ENCODE measurements at regions of chr9 and their contacts with region 1.

Region 1: GRCh38 chr9:93302551-93303257 is 118.8 kb downstream of the WNK2 start:
- DNase-seq: peak; percentile 87
- H3K4me3 ChIP-seq: no peak overlapping the region
- H3K27ac ChIP-seq: peak overlapping the region in 1 of 8 donors; percentile 21
- H3K4me1 ChIP-seq: peaks cover 6 to 29% (median 10%) of the 10 kb centered on the region in 6 donors
- H3K27me3 ChIP-seq: peaks cover 0 to 4% (median 0%) of the 10 kb centered on the region in 7 donors
- CTCF ChIP-seq: peak; percentile 51 to 83 (median 76)
- POLR2A ChIP-seq: no peak

Region 2: DNA sequence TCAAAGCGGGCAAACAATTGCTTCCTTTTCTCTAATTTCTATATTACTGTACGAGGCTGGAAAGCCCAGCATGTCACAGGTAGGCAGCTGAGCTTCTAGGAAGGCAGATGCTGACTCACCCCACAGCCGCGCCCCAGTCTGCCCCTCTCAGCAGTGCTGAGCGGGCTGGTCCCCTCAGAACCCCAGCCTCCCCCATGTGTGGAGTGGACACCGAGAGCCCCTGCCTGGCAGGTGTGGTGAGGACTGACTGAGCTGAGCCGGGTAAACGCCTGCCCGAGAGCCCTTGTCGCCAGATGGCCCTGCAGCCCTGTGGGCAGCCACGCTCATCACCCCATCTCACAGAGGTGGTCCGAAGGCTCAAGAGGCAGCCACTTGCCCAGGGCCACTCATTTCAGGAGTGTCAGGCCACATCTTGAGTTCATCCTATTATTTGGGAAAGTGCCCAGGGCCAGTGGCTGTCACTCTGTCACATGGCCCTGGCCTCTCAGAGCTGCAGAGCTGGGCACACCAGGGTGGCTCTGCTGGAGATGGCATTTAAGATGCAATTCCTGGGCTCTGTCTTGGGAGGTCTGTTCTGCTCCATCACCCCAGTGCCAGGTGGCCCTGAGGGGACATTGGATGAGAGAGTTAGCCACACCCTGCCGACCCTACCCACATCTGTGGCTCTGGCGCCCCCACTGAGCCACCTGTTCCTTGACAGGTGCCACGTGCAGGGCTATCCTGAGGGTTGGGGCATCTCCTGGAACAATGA is 194.2 kb before region 1 on chr9:
- intact Hi-C with region 1: loop called (anchors 5 kb)
- DNase-seq: peak; percentile 80
- H3K4me3 ChIP-seq: no peak overlapping the region
- H3K27ac ChIP-seq: peak overlapping the region in 4 of 8 donors; percentile 42 to 96 (median 82)
- H3K4me1 ChIP-seq: peaks cover 15 to 79% (median 48%) of the 10 kb centered on the region in 6 donors
- H3K27me3 ChIP-seq: no peaks in the 10 kb centered on the region
- CTCF ChIP-seq: no peak
- POLR2A ChIP-seq: no peak